HEK293 (cell line): ENCODE measurements at regions of chr12 and their contacts with region 1.

Region 1: DNA sequence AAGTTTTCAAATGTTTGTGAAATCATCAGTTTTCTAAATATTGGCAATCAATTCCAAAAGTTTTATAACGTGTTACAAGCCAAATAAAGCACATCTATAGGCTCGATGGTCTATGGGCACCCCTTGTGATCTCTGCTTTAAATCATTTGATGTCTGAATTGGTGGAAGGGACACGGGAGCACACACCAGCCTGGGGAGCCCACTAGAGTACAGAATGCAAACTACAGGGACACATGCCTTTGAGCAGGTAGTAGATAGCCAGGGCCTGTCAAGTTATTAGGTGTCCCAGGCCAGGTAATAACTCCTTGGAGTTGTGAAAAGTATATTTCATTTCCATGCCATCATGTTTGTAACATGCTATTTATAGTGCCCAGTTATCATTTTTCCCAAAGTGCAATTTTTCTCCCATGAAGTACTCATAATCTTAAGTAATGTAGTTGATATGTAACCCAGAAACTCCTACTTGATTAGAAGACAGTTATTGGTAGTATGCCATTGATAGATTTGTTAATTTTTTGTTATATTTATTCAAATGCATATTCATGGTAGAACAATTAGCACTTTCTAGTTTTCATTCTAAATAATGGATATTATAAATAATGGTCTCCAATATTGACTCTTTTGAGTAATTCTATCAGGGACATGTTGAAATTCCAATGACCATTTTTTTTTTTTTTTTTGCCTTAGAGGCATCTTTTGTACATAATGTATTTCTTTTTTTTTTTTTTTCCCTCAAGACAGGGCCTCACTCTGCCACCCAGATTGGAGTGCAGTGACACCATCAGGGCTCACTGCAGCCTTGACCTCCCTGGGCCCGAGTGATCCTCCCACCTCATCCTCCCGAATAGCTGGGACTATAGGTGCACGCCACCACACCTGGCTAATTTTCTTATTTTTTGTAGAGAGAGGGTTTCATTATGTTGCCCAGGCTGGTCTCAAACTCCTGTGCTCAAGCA is 96.9 kb upstream of the FGD4 start:
- H3K4me3 ChIP-seq: no peak overlapping the region
- H3K27ac ChIP-seq: no peak overlapping the region
- H3K4me1 ChIP-seq: peaks cover 2% of the 10 kb centered on the region; the same call in 1 of the 2 replicates
- CTCF ChIP-seq: no peak

Region 2: GRCh38 chr12:31682136-31682962 is 620.1 kb before region 1 on chr12:
- CTCF ChIA-PET with region 1: interaction called, 18 read pairs
- POLR2A ChIA-PET with region 1: no interaction called
- H3K4me3 ChIP-seq: no peak overlapping the region
- H3K27ac ChIP-seq: no peak overlapping the region
- H3K4me1 ChIP-seq: no peaks in the 10 kb centered on the region
- CTCF ChIP-seq: peak; percentile 71; the same call in 1 of the 2 replicates

Region 3: DNA sequence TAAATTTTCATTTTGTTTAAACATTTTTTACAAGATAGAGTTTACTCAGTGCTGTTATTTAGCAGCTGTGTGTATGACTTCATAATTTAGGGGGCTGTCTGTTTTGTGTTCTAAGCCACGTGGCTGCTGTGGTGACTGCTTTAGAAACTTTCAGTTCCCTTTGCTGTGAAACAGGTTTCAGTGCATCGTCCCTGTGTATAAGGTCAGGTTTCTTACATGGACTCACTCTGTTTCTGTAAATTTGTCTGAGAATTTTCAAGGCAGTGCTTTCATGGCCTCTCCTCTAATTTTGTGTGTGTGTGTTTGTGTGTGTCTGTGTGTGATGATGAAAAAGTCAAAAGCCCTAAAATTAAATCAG is 163.5 kb before region 1 on chr12:
- CTCF ChIA-PET with region 1: interaction called, 10 read pairs
- POLR2A ChIA-PET with region 1: no interaction called
- H3K4me3 ChIP-seq: no peak overlapping the region
- H3K27ac ChIP-seq: no peak overlapping the region
- H3K4me1 ChIP-seq: peaks cover 3% of the 10 kb centered on the region
- CTCF ChIP-seq: no peak

Region 4: GRCh38 chr12:32365473-32366064 is 63.1 kb after region 1 on chr12:
- CTCF ChIA-PET with region 1: no interaction called
- POLR2A ChIA-PET with region 1: no interaction called
- H3K4me3 ChIP-seq: no peak overlapping the region
- H3K27ac ChIP-seq: no peak overlapping the region
- H3K4me1 ChIP-seq: no peaks in the 10 kb centered on the region
- CTCF ChIP-seq: peak; percentile 55; the same call in 1 of the 2 replicates